Dorsolateral prefrontal cortex (tissue), 120 donors: ENCODE measurements at regions of chr18 and their contacts with region 1.

Region 1: GRCh38 chr18:2547477-2548087 is 23.7 kb downstream of the METTL4 start:
- DNase-seq: no peak
- H3K4me3 ChIP-seq: no peak overlapping the region
- H3K27ac ChIP-seq: no peak overlapping the region
- H3K27me3 ChIP-seq: no peaks in the 10 kb centered on the region
- CTCF ChIP-seq: peak; percentile 55 to 85 (median 70)

Region 2: GRCh38 chr18:864872-865273 is 1682.7 kb before region 1 on chr18:
- intact Hi-C with region 1: loop called (anchors 5 to 10 kb)
- DNase-seq: peak; percentile 37 to 80 (median 68)
- H3K4me3 ChIP-seq: no peak overlapping the region
- H3K27ac ChIP-seq: no peak overlapping the region
- H3K27me3 ChIP-seq: peaks cover 0 to 46% (median 0%) of the 10 kb centered on the region in 45 donors
- CTCF ChIP-seq: peak; percentile 48 to 96 (median 86)

Region 3: DNA sequence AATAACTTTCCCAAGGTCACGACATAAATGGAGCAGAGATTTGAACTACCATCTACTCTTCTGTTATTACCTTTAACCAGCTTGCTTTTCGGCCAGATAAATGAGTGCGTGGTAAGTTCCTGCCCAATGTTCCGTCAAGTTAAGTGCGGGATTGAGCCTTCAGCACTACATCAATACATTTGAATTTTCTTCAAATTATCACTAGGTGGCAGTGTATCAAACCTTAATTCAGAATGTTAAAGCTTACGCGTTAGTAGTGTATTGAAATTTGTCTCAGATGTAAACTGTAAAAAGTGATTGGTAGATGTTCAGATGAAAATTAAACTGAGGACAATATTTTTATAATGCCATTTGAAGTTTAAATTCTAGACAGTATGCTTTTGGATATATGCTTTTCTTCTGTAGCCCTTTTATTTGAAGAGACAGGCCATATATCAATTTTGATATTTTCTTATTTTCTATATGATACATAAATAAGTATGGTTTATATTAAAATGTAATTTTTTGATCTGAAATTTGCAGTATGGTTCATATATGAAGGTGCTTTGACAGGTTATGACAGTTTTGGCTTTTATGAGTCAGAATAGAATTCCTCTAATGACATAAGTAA is 961.6 kb before region 1 on chr18:
- intact Hi-C with region 1: loop called in 1 of 2 experiments (anchors 10 kb)
- DNase-seq: no peak
- H3K4me3 ChIP-seq: no peak overlapping the region
- H3K27ac ChIP-seq: no peak overlapping the region
- H3K27me3 ChIP-seq: peaks cover 0 to 19% (median 0%) of the 10 kb centered on the region in 45 donors
- CTCF ChIP-seq: peak in 54 of 56 donors; percentile 38 to 79 (median 62)

Region 4: GRCh38 chr18:2104620-2105462 is 442.7 kb before region 1 on chr18:
- intact Hi-C with region 1: loop called in 1 of 2 experiments (anchors 5 kb)
- DNase-seq: peak in 3 of 10 donors; percentile 36 to 52 (median 42)
- H3K4me3 ChIP-seq: no peak overlapping the region
- H3K27ac ChIP-seq: no peak overlapping the region
- H3K27me3 ChIP-seq: peaks cover 0 to 4% (median 0%) of the 10 kb centered on the region in 45 donors
- CTCF ChIP-seq: peak; percentile 28 to 78 (median 65)

Region 5: DNA sequence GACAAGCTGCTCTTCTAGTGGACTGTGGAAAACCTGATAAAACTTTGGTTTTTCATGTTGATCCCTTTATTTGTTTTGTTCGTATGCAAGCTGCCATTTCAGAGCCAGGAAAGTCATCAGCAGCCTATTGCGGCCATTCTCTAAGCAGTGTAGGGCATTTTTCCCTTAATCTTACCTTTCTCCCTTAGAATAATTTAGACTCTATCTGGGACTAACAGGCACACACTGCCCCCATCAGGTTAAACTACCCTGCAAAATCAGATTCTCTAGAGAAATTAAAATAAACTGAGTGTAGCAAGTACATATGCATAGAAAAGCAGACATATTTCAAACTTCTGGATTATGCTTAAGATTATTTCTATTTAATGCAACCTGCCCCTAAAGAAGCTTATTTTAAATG is 323.7 kb before region 1 on chr18:
- intact Hi-C with region 1: no loop called
- DNase-seq: peak in 1 of 10 donors; percentile 19
- H3K4me3 ChIP-seq: peak overlapping the region in 5 of 59 donors; percentile 1 to 34 (median 7)
- H3K27ac ChIP-seq: no peak overlapping the region
- H3K27me3 ChIP-seq: peaks cover 0 to 7% (median 0%) of the 10 kb centered on the region in 45 donors
- CTCF ChIP-seq: peak in 52 of 56 donors; percentile 18 to 70 (median 44)

Region 6: GRCh38 chr18:2337552-2338141 is 209.9 kb before region 1 on chr18:
- intact Hi-C with region 1: loop called in 1 of 2 experiments (anchors 10 kb)
- DNase-seq: no peak
- H3K4me3 ChIP-seq: no peak overlapping the region
- H3K27ac ChIP-seq: no peak overlapping the region
- H3K27me3 ChIP-seq: peaks cover 0 to 5% (median 0%) of the 10 kb centered on the region in 45 donors
- CTCF ChIP-seq: peak in 54 of 56 donors; percentile 11 to 64 (median 39)

Region 7: GRCh38 chr18:3051718-3052410 is 504.3 kb after region 1 on chr18:
- intact Hi-C with region 1: no loop called
- DNase-seq: no peak
- H3K4me3 ChIP-seq: no peak overlapping the region
- H3K27ac ChIP-seq: no peak overlapping the region
- H3K27me3 ChIP-seq: no peaks in the 10 kb centered on the region
- CTCF ChIP-seq: no peak